ENCODE measurements at regions of chr14 and their contacts with region 1.

Region 1: DNA sequence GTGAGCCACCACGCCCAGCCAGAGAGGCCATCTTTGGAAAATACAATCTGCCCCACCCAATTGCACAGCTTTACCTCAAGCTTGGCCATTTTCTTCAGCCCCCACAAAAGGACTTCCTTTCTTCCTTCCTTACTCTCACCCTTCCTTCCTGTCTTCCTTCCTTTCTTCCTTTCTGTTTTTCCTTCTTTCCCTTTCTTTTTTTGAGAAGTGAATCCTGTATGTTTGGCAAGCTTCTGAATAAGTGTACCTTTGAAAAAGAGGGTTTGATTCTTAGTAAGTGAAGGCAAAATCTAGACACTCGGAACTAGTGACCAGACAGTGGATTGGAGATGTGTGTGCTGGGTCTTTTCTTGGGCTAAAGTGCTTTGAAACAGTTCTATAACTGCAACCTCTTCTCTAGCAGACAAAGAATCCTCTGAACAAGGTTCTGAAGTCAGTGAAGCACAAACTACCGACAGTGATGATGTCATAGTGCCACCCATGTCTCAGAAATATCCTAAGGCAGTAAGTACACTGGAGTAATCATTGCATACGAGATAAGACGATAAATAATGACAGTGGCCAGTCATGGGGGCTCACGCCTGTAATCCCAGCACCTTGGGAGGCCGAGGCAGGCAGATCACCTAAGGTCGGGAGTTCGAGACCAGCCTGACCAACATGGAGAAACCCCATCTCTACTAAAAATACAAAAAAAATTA is 49.5 kb downstream of the SUPT16H start:
- DNase-seq: no peak
- ATAC-seq: no peak
- H3K4me3 ChIP-seq: no peak overlapping the region
- H3K4me3 Mint-ChIP-seq: no peak overlapping the region
- H3K27ac ChIP-seq: no peak overlapping the region
- H3K27ac Mint-ChIP-seq: no peak overlapping the region
- H3K4me1 ChIP-seq: no peaks in the 10 kb centered on the region
- H3K4me1 Mint-ChIP-seq: no peaks in the 10 kb centered on the region
- H3K27me3 ChIP-seq: no peaks in the 10 kb centered on the region
- H3K27me3 Mint-ChIP-seq: peaks cover 0 to 4% of the 10 kb centered on the region in 2 donors

Region 2: DNA sequence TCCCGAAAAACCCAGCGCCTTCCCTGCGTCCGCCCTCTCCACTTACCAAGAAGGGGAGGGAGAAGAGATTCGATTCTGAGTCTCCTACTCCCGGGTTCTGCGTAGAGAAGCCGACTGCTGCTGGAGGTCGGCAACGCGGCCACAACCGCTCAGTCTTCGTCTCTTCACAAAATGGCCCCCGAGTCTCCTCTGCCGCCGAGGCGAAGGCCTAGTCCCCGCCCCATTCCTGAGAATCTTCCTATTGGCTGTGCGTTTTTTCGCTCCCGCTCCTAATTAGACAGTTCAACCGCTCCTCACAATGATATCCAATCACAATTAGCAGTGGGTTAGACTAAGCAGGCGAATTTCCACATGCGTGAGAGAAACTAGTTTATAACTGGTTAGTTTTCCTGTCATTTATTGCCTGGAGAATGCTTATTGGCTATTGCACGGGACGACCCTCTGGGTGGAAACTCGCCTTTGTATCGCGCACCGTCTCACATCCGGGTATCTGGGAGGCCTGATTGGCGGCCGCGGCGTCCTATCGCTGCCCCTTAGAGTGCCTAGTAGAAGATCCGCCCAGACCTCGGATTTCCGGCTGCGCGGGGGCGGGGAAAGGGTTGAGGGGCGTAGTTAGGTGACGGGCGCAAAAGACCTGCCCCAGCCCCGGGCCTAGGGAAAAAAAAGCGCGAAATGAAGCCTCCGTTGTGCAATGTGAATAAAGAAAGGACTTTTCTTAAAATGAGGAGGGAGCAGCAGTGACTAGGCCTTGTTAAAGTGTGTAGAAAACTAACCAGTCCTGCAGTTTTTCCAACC is 64.9 kb before region 1 on chr14 and contains the start of gene HNRNPC:
- CTCF ChIA-PET with region 1: no interaction called
- POLR2A ChIA-PET with region 1: interaction called in 1 of 2 experiments, 10 read pairs
- DNase-seq: peak; percentile 99 to 100 (median 100)
- ATAC-seq: peak; percentile 90 to 91 (median 91)
- H3K4me3 ChIP-seq: peak within 1 kb of the TSS; percentile 91 to 92
- H3K4me3 Mint-ChIP-seq: peak within 1 kb of the TSS; percentile 90 to 100 (median 100)
- H3K27ac ChIP-seq: peak within 1 kb of the TSS; percentile 97
- H3K27ac Mint-ChIP-seq: peak within 1 kb of the TSS; percentile 100
- H3K4me1 ChIP-seq: peaks cover 23 to 30% of the 10 kb centered on the region in 2 experiments
- H3K4me1 Mint-ChIP-seq: peaks cover 36 to 45% (median 38%) of the 10 kb centered on the region in 3 donors
- H3K27me3 ChIP-seq: no peaks in the 10 kb centered on the region
- H3K27me3 Mint-ChIP-seq: no peaks in the 10 kb centered on the region
- total RNA-seq, gene HNRNPC: 417 to 530 (median 441) TPM

Region 3: GRCh38 chr14:21322716-21323115 is 11.6 kb before region 1 on chr14:
- CTCF ChIA-PET with region 1: no interaction called
- POLR2A ChIA-PET with region 1: no interaction called
- DNase-seq: no peak
- ATAC-seq: no peak
- H3K4me3 ChIP-seq: no peak overlapping the region
- H3K4me3 Mint-ChIP-seq: no peak overlapping the region
- H3K27ac ChIP-seq: no peak overlapping the region
- H3K27ac Mint-ChIP-seq: no peak overlapping the region
- H3K4me1 ChIP-seq: no peaks in the 10 kb centered on the region
- H3K4me1 Mint-ChIP-seq: peaks cover 8 to 13% (median 8%) of the 10 kb centered on the region in 3 donors
- H3K27me3 ChIP-seq: no peaks in the 10 kb centered on the region
- H3K27me3 Mint-ChIP-seq: peaks cover 4 to 5% of the 10 kb centered on the region in 2 donors